A549 (cell line): ENCODE measurements at regions of chrX and their contacts with region 1.

Region 1: DNA sequence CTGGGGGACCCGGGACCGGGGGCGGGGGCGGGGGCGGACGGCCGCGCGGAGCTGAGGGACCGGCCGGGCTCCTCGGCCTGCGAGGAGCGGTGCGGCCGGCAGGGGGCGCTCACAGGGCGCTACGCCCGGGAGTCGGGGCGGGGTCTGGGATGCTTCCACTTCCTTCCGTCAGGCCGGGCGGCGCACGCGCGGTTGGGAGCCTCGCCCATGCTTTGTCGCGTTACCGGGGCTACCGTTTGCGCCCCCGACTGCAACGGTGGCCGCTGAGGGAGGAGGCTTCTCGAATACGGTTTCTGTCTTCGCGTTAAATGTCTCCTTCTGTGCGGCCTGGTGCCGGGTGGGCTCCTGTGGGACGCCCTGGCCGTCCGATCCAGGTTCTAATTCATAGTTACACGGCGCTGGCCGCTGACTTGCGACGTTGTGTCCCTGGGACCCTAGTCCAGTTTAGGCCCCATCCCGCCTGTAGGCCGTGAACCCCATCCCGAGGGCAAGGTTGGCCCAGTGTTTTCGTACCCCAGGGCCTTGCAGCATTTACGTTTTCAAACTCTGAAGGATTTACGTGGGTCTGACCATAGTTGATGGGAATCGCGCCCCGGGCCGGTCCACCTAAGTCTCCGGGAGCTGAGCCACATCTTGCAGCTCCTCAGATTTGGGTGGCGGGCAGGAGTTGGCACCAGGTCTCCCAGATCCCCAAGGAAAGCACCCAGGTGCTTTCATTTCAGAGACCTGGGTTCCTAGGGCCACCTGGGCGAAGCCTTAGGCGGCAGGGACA is 549 bp downstream of the MSL3 start:
- DNase-seq: peak; percentile 70 to 89
- ATAC-seq: peak; percentile 67 to 80
- H3K4me3 ChIP-seq: peak overlapping the region; percentile 84
- H3K27ac ChIP-seq: peak overlapping the region; percentile 94
- H3K4me1 ChIP-seq: peaks cover 13% of the 10 kb centered on the region
- CTCF ChIP-seq: peak; percentile 78
- EP300 ChIP-seq: no peak
- POLR2A ChIP-seq: peak; percentile 54
- RAD21 ChIP-seq: peak in 1 of 2 experiments; percentile 29; a peak in 1 of 5 replicates

Region 2: DNA sequence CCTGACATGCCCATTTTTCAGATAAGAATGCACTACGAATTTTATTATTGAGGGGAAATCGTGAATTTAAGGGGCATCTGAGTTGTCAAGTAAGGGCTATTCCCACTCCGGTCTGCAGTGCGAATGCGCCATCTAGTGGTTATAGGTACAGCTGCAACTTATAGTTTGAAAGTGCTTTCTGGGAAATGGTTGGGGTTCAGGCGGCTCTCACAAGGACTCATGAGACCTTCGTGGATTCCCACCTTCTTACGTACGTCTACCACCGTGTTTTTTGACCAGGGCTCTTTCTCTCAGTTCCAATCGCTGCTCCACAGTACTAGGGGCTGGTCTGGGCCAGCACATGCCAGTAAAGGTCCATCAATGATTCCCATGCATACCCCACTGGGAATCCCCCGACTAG is 11.7 kb after region 1 on chrX:
- CTCF ChIA-PET with region 1: interaction called, 35 read pairs
- POLR2A ChIA-PET with region 1: no interaction called
- DNase-seq: peak; percentile 49 to 69
- ATAC-seq: peak; percentile 87 to 95; a peak in 5 of 6 replicates
- H3K4me3 ChIP-seq: no peak overlapping the region
- H3K27ac ChIP-seq: no peak overlapping the region
- H3K4me1 ChIP-seq: no peaks in the 10 kb centered on the region
- CTCF ChIP-seq: peak; percentile 82
- EP300 ChIP-seq: no peak
- POLR2A ChIP-seq: no peak
- RAD21 ChIP-seq: peak; percentile 67 to 72; a peak in 4 of 5 replicates

Region 3: GRCh38 chrX:11792461-11793421 is 34.2 kb after region 1 on chrX:
- CTCF ChIA-PET with region 1: no interaction called
- POLR2A ChIA-PET with region 1: no interaction called
- DNase-seq: peak in 1 of 2 experiments; percentile 7
- ATAC-seq: no peak
- H3K4me3 ChIP-seq: no peak overlapping the region
- H3K27ac ChIP-seq: no peak overlapping the region
- H3K4me1 ChIP-seq: no peaks in the 10 kb centered on the region
- CTCF ChIP-seq: no peak
- EP300 ChIP-seq: no peak
- POLR2A ChIP-seq: no peak
- RAD21 ChIP-seq: no peak